Activated CD8-positive, alpha-beta T cell treated with anti-CD3 and anti-CD28 coated beads for 36 hours (primary cell): ENCODE measurements at regions of chr9 and their contacts with region 1.

Region 1: DNA sequence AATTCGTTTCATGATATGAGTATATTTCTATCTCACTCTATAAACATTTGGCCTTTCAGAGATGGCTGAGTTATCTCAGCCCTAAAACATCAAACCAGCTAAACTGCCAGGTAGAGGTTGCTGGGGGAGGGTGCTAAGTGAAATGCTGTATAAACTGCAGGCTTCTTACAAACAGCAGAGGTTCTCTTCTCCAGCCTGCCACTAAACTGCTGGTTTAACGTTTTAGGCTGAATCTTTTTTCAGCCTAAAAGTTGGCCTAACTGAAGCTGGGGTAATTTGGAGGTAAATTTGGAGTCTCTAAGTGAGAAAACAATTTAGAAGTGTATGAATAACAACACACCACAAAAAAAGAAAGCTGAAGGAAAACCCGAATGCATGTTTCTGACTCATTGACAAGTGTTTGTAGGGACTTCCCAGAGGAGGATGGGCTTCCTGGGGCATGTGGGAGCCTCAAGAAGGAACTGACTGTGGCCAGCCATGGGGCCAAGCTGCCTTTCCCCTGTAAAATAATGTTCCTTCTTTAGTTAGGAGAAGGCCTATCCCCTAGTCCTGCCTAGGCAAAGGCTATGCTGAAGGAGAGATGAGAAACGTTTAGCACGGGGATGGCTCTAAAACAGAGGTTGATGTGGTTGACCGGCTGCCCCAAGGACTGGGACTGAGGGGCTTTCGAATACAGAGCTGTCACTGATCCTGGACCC is 44.3 kb downstream of the SLC28A3 start:
- DNase-seq: peak; percentile 79
- ATAC-seq: peak; percentile 79
- H3K4me3 Mint-ChIP-seq: peak overlapping the region; percentile 56
- H3K27ac Mint-ChIP-seq: peak overlapping the region; percentile 96
- H3K4me1 Mint-ChIP-seq: peaks cover 51% of the 10 kb centered on the region
- H3K27me3 Mint-ChIP-seq: no peaks in the 10 kb centered on the region
- CTCF ChIP-seq: no peak

Region 2: GRCh38 chr9:84285381-84285780 is 10.9 kb before region 1 on chr9:
- CTCF ChIA-PET with region 1: interaction called, 6 read pairs
- POLR2A ChIA-PET with region 1: interaction called, 15 read pairs
- intact Hi-C with region 1: no loop called
- DNase-seq: no peak
- ATAC-seq: no peak
- H3K4me3 Mint-ChIP-seq: no peak overlapping the region
- H3K27ac Mint-ChIP-seq: no peak overlapping the region
- H3K4me1 Mint-ChIP-seq: peaks cover 12% of the 10 kb centered on the region
- H3K27me3 Mint-ChIP-seq: peaks cover 5% of the 10 kb centered on the region
- CTCF ChIP-seq: no peak